Activated T-helper 1 cell treated with anti-CD3 and anti-CD28 coated beads, Interleukin-12 subunit alpha, Interleukin-12 subunit beta, Interleukin-2, Interleukin-4 antibody, amounts not matched to agents 30 ng/mL and 10 ng/mL and 1 ng/mL, durations not matched to agents 14 hours and 24 hours and 36 hours (primary cell): ENCODE measurements at regions of chr9 and their contacts with region 1.

Region 1: GRCh38 chr9:20570756-20571155 is 51.5 kb downstream of the MLLT3 start:
- DNase-seq: no peak
- H3K4me3 Mint-ChIP-seq: no peak overlapping the region
- H3K27ac Mint-ChIP-seq: peak overlapping the region; percentile 22
- H3K4me1 Mint-ChIP-seq: peaks cover 81% of the 10 kb centered on the region
- H3K27me3 Mint-ChIP-seq: no peaks in the 10 kb centered on the region

Region 2: GRCh38 chr9:20558566-20559016 is 12.2 kb before region 1 on chr9:
- intact Hi-C with region 1: loop called (anchors 1 kb)
- DNase-seq: peak; percentile 18
- H3K4me3 Mint-ChIP-seq: peak overlapping the region; percentile 20
- H3K27ac Mint-ChIP-seq: peak overlapping the region; percentile 47
- H3K4me1 Mint-ChIP-seq: peaks cover 83% of the 10 kb centered on the region
- H3K27me3 Mint-ChIP-seq: no peaks in the 10 kb centered on the region

Region 3: GRCh38 chr9:20582150-20582549 is 11.4 kb after region 1 on chr9:
- intact Hi-C with region 1: loop called (anchors 1 kb)
- DNase-seq: no peak
- H3K4me3 Mint-ChIP-seq: no peak overlapping the region
- H3K27ac Mint-ChIP-seq: no peak overlapping the region
- H3K4me1 Mint-ChIP-seq: peaks cover 63% of the 10 kb centered on the region
- H3K27me3 Mint-ChIP-seq: no peaks in the 10 kb centered on the region

Region 4: DNA sequence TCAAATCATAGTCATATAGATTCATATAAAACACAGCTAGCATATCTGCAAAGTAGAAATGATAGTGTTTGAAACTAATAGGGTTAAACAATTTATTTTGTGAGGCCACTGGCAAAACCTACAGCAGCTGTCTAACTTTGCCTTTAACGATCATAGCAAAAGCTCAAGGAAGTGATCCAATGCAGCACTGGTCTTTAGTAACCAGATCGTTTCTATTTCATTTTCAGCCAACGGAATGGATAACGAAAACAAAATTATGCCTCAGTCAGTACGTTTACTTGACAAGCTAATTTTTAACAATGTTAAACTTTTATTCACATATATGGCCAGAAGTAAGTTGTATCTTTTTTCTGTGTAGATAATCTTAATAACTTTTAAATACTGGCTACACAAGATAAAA is 33.8 kb after region 1 on chr9:
- intact Hi-C with region 1: loop called (anchors 2 kb)
- DNase-seq: no peak
- H3K4me3 Mint-ChIP-seq: peak overlapping the region; percentile 67
- H3K27ac Mint-ChIP-seq: peak overlapping the region; percentile 49
- H3K4me1 Mint-ChIP-seq: peaks cover 71% of the 10 kb centered on the region
- H3K27me3 Mint-ChIP-seq: no peaks in the 10 kb centered on the region

Region 5: GRCh38 chr9:20640331-20641187 is 69.8 kb after region 1 on chr9:
- intact Hi-C with region 1: no loop called
- DNase-seq: peak; percentile 33
- H3K4me3 Mint-ChIP-seq: peak overlapping the region; percentile 8
- H3K27ac Mint-ChIP-seq: no peak overlapping the region
- H3K4me1 Mint-ChIP-seq: peaks cover 11% of the 10 kb centered on the region
- H3K27me3 Mint-ChIP-seq: peaks cover 9% of the 10 kb centered on the region